Psoas muscle (tissue), 8 donors: ENCODE measurements at regions of chr15 and their contacts with region 1.

Region 1: GRCh38 chr15:44426975-44427755 is at the start of gene CTDSPL2:
- DNase-seq: peak; percentile 98 to 99
- ATAC-seq: peak; percentile 97 to 99 (median 98)
- H3K4me3 ChIP-seq: peak within 1 kb of the TSS; percentile 87
- H3K27ac ChIP-seq: peak within 1 kb of the TSS; percentile 91
- H3K4me1 ChIP-seq: peaks cover 18% of the 10 kb centered on the region
- H3K27me3 ChIP-seq: no peaks in the 10 kb centered on the region
- CTCF ChIP-seq: peak; percentile 23
- total RNA-seq, gene CTDSPL2: 12.1 to 18.1 (median 17.2) TPM

Region 2: GRCh38 chr15:44286814-44287452 is 140.2 kb before region 1 on chr15:
- intact Hi-C with region 1: loop called (anchors 5 kb)
- DNase-seq: no peak
- ATAC-seq: no peak
- H3K4me3 ChIP-seq: peak overlapping the region; percentile 72
- H3K27ac ChIP-seq: peak overlapping the region; percentile 77
- H3K4me1 ChIP-seq: peaks cover 23% of the 10 kb centered on the region
- H3K27me3 ChIP-seq: no peaks in the 10 kb centered on the region
- CTCF ChIP-seq: peak; percentile 12

Region 3: DNA sequence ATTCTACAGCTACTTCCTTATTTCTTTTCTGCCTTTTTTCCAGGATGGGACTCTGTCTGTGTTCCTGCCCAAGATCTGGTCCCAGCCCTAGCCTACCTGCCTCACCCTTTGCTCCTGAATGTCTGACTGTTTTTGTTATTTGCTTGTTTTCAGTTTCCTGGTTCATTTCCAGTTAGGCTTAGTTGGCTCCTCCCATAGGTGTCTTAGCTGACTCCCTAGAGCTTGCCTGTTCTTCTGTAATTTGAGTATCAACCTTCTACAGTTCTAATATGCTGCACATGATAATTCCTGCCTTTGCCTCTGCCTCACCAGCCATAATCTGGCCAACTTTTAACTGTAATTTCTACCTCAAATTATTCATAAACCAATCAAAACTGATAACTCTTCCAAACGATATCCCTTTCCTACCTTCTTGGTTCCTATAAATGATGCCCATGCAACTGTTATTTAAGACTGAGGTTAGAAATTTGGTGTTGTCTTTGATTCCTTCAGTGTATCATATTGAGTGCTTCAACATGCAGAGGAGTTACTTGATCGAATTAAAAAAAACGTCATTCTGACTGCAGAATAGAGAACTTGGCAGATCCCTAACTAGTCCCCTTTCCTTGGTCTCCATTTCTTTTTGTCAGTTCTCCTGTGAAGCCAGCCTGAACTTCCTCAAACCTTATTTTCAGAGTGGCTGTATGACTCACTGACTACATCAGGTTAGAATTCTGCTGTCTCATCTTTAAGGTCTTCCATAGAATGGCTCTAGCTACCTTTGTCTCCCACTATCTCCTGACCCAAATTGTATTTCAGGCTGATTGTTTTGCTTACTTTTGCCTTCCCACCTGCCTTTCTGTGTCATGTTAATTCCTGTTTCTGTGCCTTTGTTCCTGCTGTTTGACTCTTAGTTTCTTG is 130.3 kb before region 1 on chr15:
- intact Hi-C with region 1: loop called in 1 of 2 experiments (anchors 5 kb)
- DNase-seq: no peak
- ATAC-seq: peak; percentile 56 to 81 (median 69)
- H3K4me3 ChIP-seq: no peak overlapping the region
- H3K27ac ChIP-seq: peak overlapping the region; percentile 51
- H3K4me1 ChIP-seq: peaks cover 9% of the 10 kb centered on the region
- H3K27me3 ChIP-seq: no peaks in the 10 kb centered on the region
- CTCF ChIP-seq: no peak

Region 4: GRCh38 chr15:44308415-44308814 is 118.8 kb before region 1 on chr15:
- intact Hi-C with region 1: no loop called
- DNase-seq: no peak
- ATAC-seq: no peak
- H3K4me3 ChIP-seq: no peak overlapping the region
- H3K27ac ChIP-seq: no peak overlapping the region
- H3K4me1 ChIP-seq: peaks cover 8% of the 10 kb centered on the region
- H3K27me3 ChIP-seq: no peaks in the 10 kb centered on the region
- CTCF ChIP-seq: no peak

Region 5: DNA sequence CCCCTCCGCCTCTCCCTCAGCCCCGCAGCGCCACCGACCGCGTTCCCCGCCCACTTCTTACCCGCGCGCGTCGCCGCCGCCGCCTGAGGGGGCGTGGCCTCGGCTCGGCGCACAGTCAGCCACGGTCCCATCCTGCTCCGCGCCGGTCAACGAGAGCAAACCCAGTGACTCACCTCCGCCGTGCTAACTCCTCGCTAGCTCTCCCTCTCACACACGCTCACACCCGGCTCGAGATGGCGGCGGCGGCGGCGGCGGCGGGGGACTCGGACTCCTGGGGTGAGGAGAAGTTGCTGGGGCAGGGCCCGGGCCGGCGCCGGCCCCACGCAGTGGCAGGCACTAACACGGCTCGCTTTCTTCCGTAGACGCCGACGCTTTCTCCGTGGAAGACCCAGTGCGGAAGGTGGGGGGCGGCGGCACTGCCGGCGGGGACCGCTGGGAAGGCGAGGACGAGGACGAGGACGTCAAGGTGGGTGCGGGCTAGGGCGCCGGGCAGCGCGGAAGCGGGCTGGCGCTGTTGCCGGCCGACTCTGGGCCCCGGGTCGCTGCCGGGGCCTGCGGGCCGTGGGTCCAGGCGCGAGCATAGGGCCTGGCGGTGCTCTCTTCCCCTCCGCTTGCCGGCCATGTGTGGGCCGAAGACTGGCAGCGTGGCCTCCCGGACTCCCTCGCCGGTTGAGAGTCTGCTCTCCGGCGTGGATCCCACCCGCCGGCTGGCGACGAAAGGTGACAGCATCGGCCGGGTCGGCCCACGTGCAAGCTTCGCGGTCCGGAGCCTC is 110.0 kb after region 1 on chr15 and contains the start of gene EIF3J:
- intact Hi-C with region 1: loop called in 1 of 2 experiments (anchors 5 kb)
- DNase-seq: peak; percentile 96 to 98
- ATAC-seq: peak; percentile 92 to 95 (median 94)
- H3K4me3 ChIP-seq: peak within 1 kb of the TSS; percentile 98
- H3K27ac ChIP-seq: peak within 1 kb of the TSS; percentile 99
- H3K4me1 ChIP-seq: peaks cover 41% of the 10 kb centered on the region
- H3K27me3 ChIP-seq: no peaks in the 10 kb centered on the region
- CTCF ChIP-seq: peak; percentile 2
- total RNA-seq, gene EIF3J: 123 to 233 (median 201) TPM